ENCODE measurements at regions of chr22 and their contacts with region 1.

Region 1: DNA sequence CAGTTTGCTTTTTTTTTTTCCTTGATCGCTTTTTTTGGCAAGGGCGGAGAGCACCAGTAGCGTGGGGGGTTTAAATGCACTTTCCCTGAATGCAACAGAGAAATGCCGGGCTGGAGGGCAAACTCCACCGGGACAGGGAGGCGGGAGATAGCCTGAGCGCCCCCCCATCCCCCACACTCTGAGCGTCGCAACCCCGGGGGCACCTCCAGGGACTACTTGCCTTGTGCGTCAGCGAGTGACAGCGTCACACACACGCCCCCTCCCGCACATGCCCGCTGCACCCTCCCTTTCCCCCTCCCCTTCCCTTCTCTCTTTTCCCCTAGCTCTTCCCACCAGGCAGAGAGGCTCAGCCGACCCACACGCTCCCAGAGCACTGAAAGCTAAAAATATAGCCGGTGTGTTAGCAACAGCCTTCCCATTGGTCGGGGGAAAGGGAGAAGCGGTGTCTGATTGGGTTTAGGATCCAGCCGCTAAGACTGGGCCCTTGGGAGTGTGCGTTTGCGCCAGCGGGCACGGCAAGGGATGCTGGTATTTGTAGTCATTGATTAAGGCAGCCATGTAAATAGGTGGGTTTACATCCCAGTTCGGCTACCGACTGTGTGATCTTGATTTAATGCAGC is 1.7 kb upstream of the TOB2 start:
- DNase-seq: peak; percentile 94
- H3K4me3 Mint-ChIP-seq: peak overlapping the region; percentile 95
- H3K27ac Mint-ChIP-seq: peak overlapping the region; percentile 93
- H3K4me1 Mint-ChIP-seq: peaks cover 22% of the 10 kb centered on the region
- H3K27me3 Mint-ChIP-seq: no peaks in the 10 kb centered on the region

Region 2: GRCh38 chr22:41381329-41382097 is 66.8 kb before region 1 on chr22 and contains the start of gene TEF:
- CTCF ChIA-PET with region 1: no interaction called
- POLR2A ChIA-PET with region 1: interaction called, 36 read pairs
- DNase-seq: peak; percentile 98
- H3K4me3 Mint-ChIP-seq: peak within 1 kb of the TSS; percentile 88
- H3K27ac Mint-ChIP-seq: peak within 1 kb of the TSS; percentile 89
- H3K4me1 Mint-ChIP-seq: peaks cover 15% of the 10 kb centered on the region
- H3K27me3 Mint-ChIP-seq: peaks cover under 1% of the 10 kb centered on the region
- total RNA-seq, gene TEF: 2.3 to 3.3 TPM

Region 3: GRCh38 chr22:41417622-41418390 is 30.5 kb before region 1 on chr22:
- CTCF ChIA-PET with region 1: no interaction called
- POLR2A ChIA-PET with region 1: interaction called, 15 read pairs
- DNase-seq: no peak
- H3K4me3 Mint-ChIP-seq: no peak overlapping the region
- H3K27ac Mint-ChIP-seq: no peak overlapping the region
- H3K4me1 Mint-ChIP-seq: peaks cover 15% of the 10 kb centered on the region
- H3K27me3 Mint-ChIP-seq: no peaks in the 10 kb centered on the region

Region 4: DNA sequence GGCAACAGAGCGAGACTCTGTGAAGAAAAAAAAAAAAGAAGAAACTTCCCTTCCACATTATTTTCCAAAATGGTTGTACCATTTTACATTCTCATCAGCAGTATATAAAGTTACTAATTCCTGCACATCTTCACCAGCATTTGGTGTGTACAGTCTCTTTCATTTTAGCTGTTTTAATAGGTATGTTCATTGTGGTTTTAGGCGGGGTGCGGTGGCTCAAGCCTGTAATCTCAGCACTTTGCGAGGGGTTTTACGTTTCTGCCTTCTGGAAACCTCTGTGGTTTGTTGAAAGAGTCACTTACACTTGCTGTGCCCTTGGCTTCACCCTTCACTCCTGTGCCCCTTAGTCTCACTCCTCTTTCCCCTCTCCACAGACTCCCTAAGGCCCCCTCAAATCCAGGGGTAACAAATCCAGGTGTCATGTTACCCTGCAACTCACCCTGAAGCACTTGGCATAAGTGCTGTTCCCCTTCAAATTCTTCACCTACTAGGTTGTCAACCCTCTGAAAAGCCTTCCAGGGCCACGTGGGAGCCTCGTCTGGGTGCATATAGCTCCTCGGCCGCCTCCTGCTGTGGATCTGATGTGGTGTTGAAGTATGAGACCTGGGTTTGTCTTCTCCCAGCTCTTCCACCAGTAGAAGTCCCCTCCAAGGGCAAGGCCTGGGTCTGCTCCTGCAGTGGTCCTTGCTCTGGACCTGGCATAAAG is 22.5 kb before region 1 on chr22:
- CTCF ChIA-PET with region 1: interaction called, 7 read pairs
- POLR2A ChIA-PET with region 1: interaction called, 64 read pairs
- DNase-seq: peak; percentile 77
- H3K4me3 Mint-ChIP-seq: peak overlapping the region; percentile 14
- H3K27ac Mint-ChIP-seq: peak overlapping the region; percentile 82
- H3K4me1 Mint-ChIP-seq: peaks cover 14% of the 10 kb centered on the region
- H3K27me3 Mint-ChIP-seq: no peaks in the 10 kb centered on the region

Region 5: GRCh38 chr22:41436322-41437113 is 11.8 kb before region 1 on chr22:
- CTCF ChIA-PET with region 1: no interaction called
- POLR2A ChIA-PET with region 1: interaction called, 28 read pairs
- DNase-seq: no peak
- H3K4me3 Mint-ChIP-seq: no peak overlapping the region
- H3K27ac Mint-ChIP-seq: peak overlapping the region; percentile 16
- H3K4me1 Mint-ChIP-seq: peaks cover 7% of the 10 kb centered on the region
- H3K27me3 Mint-ChIP-seq: no peaks in the 10 kb centered on the region

Region 6: GRCh38 chr22:41995211-41995610 is 546.9 kb after region 1 on chr22:
- CTCF ChIA-PET with region 1: no interaction called
- POLR2A ChIA-PET with region 1: no interaction called
- DNase-seq: no peak
- H3K4me3 Mint-ChIP-seq: no peak overlapping the region
- H3K27ac Mint-ChIP-seq: no peak overlapping the region
- H3K4me1 Mint-ChIP-seq: peaks cover 26% of the 10 kb centered on the region
- H3K27me3 Mint-ChIP-seq: peaks cover 2% of the 10 kb centered on the region

Measured in activated CD4-positive, alpha-beta memory T cell treated with anti-CD3 and anti-CD28 coated beads, Interleukin-2, amount 10 ng/mL, durations not matched to agents 7 days and 5 days (primary cell).